Heart left ventricle (tissue), 16 donors: ENCODE measurements at regions of chr12 and their contacts with region 1.

Region 1: DNA sequence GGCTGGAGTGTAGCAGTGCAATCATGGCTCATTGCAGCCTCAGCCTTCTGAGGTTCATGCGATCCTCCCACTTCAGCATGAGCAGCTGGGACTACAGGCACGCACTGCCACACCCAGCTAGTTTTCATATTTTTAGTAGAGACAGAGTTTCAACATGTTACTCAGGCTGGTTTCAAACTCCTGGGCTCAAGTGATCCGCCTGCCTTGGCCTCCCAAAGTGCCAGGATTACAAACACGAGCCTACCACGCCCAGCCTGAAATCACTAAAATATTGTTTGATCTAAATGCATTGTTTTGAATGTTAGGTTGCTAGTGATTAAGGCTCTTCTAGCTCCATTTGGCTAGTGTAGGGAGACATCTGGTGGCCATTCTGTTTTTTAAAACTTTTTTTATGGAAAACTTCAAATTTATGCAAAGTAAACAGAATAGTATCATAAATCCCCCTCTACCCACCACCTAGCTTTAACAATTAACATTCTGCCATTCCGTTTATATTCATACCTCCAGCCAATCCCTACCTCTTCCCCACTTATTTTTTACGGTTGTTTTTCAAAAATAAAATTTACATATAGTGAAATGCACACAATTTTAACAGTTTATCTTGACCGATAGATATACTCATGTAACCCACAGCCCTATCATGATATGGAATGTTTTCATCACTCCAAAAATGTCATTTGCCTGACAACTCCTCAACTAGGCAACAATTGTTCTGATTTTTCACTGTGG is 37.8 kb downstream of the MYO1H start:
- DNase-seq: peak in 1 of 5 donors; percentile 27
- ATAC-seq: peak in 3 of 4 donors; percentile 44 to 80 (median 69)
- H3K4me3 ChIP-seq: peak overlapping the region in 2 of 12 donors; percentile 17 to 31
- H3K27ac ChIP-seq: peak overlapping the region in 1 of 12 donors; percentile 27
- H3K4me1 ChIP-seq: peaks cover 0 to 6% (median 0%) of the 10 kb centered on the region in 12 donors
- H3K27me3 ChIP-seq: peaks cover 0 to 11% (median 0%) of the 10 kb centered on the region in 9 donors
- CTCF ChIP-seq: peak; percentile 25 to 69 (median 50)
- POLR2A ChIP-seq: no peak

Region 2: GRCh38 chr12:109099431-109100020 is 286.0 kb before region 1 on chr12:
- intact Hi-C with region 1: loop called in 2 of 10 experiments (anchors 10 kb)
- DNase-seq: no peak
- ATAC-seq: no peak
- H3K4me3 ChIP-seq: peak overlapping the region in 8 of 12 donors; percentile 13 to 91 (median 72)
- H3K27ac ChIP-seq: peak overlapping the region in 6 of 12 donors; percentile 85 to 96 (median 91)
- H3K4me1 ChIP-seq: peaks cover 0 to 26% (median 18%) of the 10 kb centered on the region in 12 donors
- H3K27me3 ChIP-seq: no peaks in the 10 kb centered on the region
- CTCF ChIP-seq: no peak
- POLR2A ChIP-seq: no peak

Region 3: GRCh38 chr12:109264095-109264942 is 121.2 kb before region 1 on chr12:
- intact Hi-C with region 1: loop called (anchors 1 to 5 kb)
- DNase-seq: peak; percentile 62 to 84 (median 76)
- ATAC-seq: peak; percentile 46 to 79 (median 65)
- H3K4me3 ChIP-seq: no peak overlapping the region
- H3K27ac ChIP-seq: peak overlapping the region in 3 of 12 donors; percentile 27 to 62 (median 50)
- H3K4me1 ChIP-seq: peaks cover 0 to 7% (median 0%) of the 10 kb centered on the region in 12 donors
- H3K27me3 ChIP-seq: no peaks in the 10 kb centered on the region
- CTCF ChIP-seq: peak; percentile 58 to 76 (median 69)
- POLR2A ChIP-seq: no peak

Region 4: GRCh38 chr12:109331301-109331952 is 54.1 kb before region 1 on chr12:
- intact Hi-C with region 1: no loop called
- DNase-seq: no peak
- ATAC-seq: no peak
- H3K4me3 ChIP-seq: no peak overlapping the region
- H3K27ac ChIP-seq: peak overlapping the region in 1 of 12 donors; percentile 40
- H3K4me1 ChIP-seq: no peaks in the 10 kb centered on the region
- H3K27me3 ChIP-seq: peaks cover 0 to 8% (median 0%) of the 10 kb centered on the region in 9 donors
- CTCF ChIP-seq: no peak
- POLR2A ChIP-seq: no peak